Activated CD4-positive, alpha-beta T cell treated with anti-CD3 and anti-CD28 coated beads for 36 hours (primary cell): ENCODE measurements at regions of chr7 and their contacts with region 1.

Region 1: DNA sequence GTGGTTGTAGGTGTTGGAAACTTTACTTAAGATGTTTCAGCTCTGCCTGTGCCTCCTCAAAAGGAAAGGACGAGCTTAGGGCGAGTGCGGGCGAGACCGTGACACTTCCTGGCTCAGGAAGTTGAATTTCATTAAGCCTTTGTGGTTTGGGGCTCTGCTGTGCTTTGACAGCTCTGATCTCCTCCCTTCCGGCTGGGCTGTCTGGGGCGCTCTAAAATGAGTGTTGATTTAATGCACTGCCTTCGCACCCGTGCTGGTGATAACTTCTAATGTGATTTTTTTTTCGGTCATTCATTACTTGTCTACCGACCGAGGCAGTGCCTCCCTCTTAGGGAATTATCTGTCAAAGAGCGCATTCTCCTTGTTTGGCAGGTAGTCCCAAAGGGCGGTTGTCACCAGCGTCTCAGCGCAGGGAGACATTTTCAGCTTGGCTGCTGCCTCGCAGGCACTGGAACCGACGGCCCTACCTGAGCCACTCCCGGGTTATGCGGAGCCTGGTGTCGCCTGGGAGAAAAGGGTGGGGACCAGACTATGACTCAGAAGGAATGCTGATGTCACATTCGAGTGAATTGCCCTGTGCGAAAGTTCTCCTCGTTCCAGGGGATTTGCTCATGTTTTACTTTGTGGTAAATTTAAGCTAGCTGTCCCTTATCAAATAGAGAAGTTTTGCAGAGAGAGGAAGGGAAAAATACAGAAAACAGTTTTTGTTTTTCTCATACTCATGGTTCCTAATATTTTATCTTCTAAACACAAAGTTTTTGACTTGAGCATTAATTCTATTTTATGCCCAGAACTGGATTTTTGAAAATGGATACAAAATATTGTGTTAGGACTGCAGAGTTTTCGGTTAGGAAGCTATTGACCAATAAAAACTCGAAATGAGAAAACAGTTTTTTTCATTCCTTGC is 920 bp downstream of the TES start:
- DNase-seq: peak; percentile 87
- ATAC-seq: peak; percentile 80
- H3K4me3 Mint-ChIP-seq: peak overlapping the region; percentile 97
- H3K27ac Mint-ChIP-seq: peak overlapping the region; percentile 98
- H3K4me1 Mint-ChIP-seq: peaks cover 55% of the 10 kb centered on the region
- H3K27me3 Mint-ChIP-seq: no peaks in the 10 kb centered on the region

Region 2: GRCh38 chr7:116180302-116180701 is 31.0 kb before region 1 on chr7:
- CTCF ChIA-PET with region 1: interaction called, 17 read pairs
- POLR2A ChIA-PET with region 1: no interaction called
- intact Hi-C with region 1: loop called (anchors 1 to 2 kb)
- DNase-seq: peak; percentile 21
- ATAC-seq: peak; percentile 74
- H3K4me3 Mint-ChIP-seq: no peak overlapping the region
- H3K27ac Mint-ChIP-seq: no peak overlapping the region
- H3K4me1 Mint-ChIP-seq: peaks cover 7% of the 10 kb centered on the region
- H3K27me3 Mint-ChIP-seq: no peaks in the 10 kb centered on the region

Region 3: DNA sequence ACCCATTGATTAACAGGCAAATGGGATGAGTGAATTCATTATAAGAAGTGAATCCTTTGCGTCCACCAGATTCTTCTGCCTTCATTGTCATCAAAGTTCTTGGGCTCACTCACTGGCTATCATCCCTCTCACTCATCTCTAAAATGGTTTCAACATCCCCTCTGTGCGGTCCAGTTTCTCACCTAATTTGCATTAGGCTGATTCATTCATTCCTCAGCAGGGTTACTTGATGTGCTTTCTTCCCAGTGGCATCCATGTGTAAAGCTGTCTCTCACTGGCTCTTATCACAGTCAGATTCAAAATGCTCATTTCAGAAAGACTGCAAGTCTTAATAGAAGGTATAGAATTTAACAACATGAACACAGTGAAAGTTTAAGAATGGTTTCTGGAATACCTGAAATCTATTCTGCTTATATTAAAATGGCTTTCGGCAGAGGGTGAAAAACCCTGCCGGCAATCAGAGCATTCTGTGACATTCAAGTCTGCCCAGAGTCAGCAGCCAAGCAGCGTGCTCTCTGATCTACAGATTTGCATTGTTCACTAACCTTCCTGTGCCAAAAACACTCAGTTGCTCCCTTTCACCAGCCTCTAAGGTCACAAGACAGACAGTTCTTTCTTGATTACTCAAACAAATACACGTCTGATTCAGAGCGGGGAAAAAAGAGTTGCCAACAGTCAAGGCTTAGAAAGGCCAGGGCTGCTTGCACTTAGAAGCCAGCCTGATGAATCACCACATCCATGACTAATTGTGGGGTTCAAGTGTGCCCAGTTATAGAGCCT is 105.8 kb after region 1 on chr7:
- CTCF ChIA-PET with region 1: no interaction called
- POLR2A ChIA-PET with region 1: no interaction called
- intact Hi-C with region 1: loop called in 1 of 2 experiments (anchors 1 kb)
- DNase-seq: peak; percentile 66
- ATAC-seq: peak; percentile 95
- H3K4me3 Mint-ChIP-seq: no peak overlapping the region
- H3K27ac Mint-ChIP-seq: peak overlapping the region; percentile 38
- H3K4me1 Mint-ChIP-seq: peaks cover 14% of the 10 kb centered on the region
- H3K27me3 Mint-ChIP-seq: peaks cover 16% of the 10 kb centered on the region

Region 4: DNA sequence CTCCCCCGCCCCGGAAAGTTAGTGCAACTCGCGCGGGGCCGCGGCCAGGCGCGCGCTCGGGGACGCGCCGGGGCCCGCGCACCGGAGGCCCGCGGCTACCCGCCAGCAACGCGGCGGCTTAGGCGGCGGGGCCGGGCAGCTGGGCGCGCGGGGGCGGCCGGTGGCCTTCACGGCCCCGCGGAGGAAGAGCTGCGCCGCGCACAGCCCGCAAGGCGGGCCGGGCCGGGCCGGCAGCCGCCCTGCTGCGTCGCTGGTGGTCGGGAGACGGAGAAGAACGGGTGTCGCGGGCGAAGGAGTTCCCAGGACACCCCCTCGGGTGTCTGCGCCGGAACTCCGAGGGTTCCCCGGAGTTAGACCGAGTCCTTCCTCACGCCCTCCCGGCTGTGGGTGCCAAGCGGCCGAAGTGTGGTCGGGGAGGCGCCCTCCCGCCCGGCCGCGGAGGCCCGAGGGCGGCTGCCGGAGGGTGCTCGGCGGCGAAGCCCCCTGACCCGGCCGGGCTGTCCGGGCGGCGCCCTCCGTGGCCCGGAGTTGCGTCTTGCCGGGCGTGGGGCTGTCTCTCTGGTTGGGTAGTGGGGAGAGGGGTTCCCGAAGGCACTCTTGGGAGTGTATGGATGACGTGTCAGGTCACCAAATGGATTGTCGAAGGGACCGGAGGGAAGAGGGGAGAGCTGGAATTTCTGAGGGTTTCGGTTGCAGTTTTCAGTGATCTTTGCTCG is 742.6 kb after region 1 on chr7:
- CTCF ChIA-PET with region 1: no interaction called
- POLR2A ChIA-PET with region 1: no interaction called
- intact Hi-C with region 1: loop called in 1 of 2 experiments (anchors 10 kb)
- DNase-seq: peak; percentile 43
- ATAC-seq: peak; percentile 54
- H3K4me3 Mint-ChIP-seq: peak overlapping the region; percentile 93
- H3K27ac Mint-ChIP-seq: peak overlapping the region; percentile 97
- H3K4me1 Mint-ChIP-seq: peaks cover 31% of the 10 kb centered on the region
- H3K27me3 Mint-ChIP-seq: no peaks in the 10 kb centered on the region

Region 5: DNA sequence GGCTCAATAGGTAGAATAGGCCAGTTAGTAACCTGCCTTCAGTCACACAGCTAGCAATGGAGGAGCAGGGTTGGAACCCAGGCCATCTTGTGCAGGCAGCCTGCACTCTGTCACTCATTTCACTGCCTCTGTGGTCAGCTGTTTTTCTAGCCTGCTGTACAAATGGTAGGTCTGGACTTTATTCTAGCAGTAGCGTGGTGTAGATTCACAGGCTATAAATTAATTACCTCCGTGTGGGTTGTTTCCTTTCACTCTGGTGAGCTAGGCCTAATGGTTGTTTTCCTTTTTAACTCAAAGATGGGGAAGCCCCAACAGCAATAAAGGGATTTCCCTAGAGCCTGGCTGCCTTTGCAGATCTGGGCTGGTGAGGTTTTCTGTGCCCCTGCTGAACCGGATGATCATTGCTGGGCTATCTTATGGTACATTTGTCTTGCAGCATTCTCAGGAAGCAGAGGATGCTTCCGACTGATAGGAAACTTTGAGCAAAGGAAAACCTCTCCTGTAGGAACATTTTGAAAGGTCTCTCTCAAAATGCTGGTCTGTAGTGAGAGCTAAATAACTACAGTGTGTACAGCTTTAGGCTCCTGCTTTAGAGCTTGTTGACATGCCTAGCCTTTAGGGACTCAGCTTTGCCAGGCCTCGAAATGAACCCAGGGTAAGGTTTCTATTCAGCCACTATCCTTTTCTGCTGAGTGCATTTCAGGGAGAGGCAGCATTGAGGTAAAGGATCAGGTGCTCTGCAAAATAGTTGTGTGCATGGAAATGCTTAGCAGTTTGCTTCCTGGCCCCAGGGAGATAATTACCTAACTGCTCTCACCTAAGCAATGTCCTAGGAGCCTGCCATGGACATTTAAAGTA is 899.5 kb after region 1 on chr7:
- CTCF ChIA-PET with region 1: no interaction called
- POLR2A ChIA-PET with region 1: no interaction called
- intact Hi-C with region 1: loop called in 1 of 2 experiments (anchors 5 kb)
- DNase-seq: peak; percentile 69
- ATAC-seq: peak; percentile 97
- H3K4me3 Mint-ChIP-seq: no peak overlapping the region
- H3K27ac Mint-ChIP-seq: peak overlapping the region; percentile 14
- H3K4me1 Mint-ChIP-seq: peaks cover 34% of the 10 kb centered on the region
- H3K27me3 Mint-ChIP-seq: no peaks in the 10 kb centered on the region